ENCODE measurements at regions of chr3 and their contacts with region 1.

Region 1: DNA sequence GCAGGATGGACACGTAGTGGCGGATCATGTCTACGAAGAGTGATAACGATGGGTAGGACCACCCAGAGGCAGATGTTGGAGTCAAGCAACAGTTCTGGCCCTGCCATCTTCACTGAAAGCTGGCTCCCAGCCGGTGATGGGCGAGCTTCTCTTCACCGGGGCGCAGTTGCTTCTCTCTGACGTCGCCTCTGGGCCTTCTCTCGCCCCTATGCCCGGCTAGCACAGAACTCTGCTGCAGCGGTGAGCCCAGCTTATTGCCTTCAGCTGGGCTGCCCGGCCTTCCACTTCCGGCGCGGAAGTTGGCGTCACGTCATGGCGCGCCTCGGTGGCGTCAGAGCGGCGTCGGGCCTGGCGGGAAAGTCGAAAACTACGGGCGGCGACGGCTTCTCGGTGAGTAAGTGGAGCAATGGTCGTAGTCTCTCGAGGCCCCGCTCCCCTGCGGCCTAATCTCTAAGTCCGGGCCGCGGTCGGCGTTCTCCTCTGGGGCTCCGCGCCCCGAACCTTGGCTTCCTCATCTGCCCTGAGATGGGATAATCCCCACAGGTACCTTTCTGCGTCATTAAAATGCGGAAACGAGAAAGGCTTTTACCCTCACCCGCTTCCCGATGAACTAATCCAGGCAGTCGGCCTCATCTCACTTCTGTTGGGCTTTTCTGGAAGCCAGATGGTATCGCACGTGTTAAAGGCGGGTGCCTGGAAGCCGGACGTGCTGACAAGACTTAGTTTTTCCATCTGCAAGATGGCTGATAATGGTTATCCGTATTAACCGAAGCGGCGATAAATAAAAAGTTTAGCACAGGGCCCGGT is at the start of gene FANCD2:
- DNase-seq: peak; percentile 99
- H3K4me3 Mint-ChIP-seq: peak within 1 kb of the TSS; percentile 93
- H3K27ac Mint-ChIP-seq: peak within 1 kb of the TSS; percentile 98
- H3K4me1 Mint-ChIP-seq: peaks cover 18% of the 10 kb centered on the region
- H3K27me3 Mint-ChIP-seq: no peaks in the 10 kb centered on the region
- total RNA-seq, gene FANCD2: 71.4 and 73.8 TPM in 2 replicates

Region 2: GRCh38 chr3:9843715-9844438 is 182.4 kb before region 1 on chr3 and contains the start of gene RPUSD3:
- intact Hi-C with region 1: loop called (anchors 10 kb)
- DNase-seq: peak; percentile 99
- H3K4me3 Mint-ChIP-seq: peak within 1 kb of the TSS; percentile 99
- H3K27ac Mint-ChIP-seq: peak within 1 kb of the TSS; percentile 98
- H3K4me1 Mint-ChIP-seq: peaks cover 26% of the 10 kb centered on the region
- H3K27me3 Mint-ChIP-seq: no peaks in the 10 kb centered on the region
- total RNA-seq, gene RPUSD3: 84.3 and 85.7 TPM in 2 replicates

Region 3: DNA sequence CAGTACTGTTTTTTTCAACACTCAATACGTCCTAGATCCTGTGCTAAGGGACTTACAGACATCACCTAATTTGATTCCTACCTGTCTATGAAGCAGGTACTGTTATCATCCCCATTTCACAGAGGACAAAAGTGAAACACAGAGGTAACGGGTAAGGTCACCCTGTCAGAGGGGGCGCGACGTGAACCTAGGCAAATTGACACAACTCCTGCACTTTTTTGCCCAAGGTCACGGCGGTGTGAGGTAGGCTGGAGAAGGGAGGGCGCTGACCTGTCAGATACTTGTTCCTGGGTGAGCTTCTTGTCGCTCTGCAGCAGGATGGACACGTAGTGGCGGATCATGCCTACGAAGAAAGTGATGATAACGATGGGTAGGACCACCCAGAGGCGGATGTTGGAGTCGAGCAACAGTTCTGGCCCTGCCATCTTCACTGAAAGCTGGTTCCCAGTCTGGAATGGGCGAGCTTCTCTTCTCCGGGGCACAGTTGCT is 40.0 kb before region 1 on chr3:
- intact Hi-C with region 1: loop called (anchors 1 kb)
- DNase-seq: no peak
- H3K4me3 Mint-ChIP-seq: peak overlapping the region; percentile 97
- H3K27ac Mint-ChIP-seq: peak overlapping the region; percentile 99
- H3K4me1 Mint-ChIP-seq: peaks cover 31% of the 10 kb centered on the region
- H3K27me3 Mint-ChIP-seq: no peaks in the 10 kb centered on the region

Region 4: GRCh38 chr3:10142707-10143566 is 116.7 kb after region 1 on chr3:
- intact Hi-C with region 1: loop called (anchors 1 kb)
- DNase-seq: peak; percentile 72
- H3K4me3 Mint-ChIP-seq: peak overlapping the region; percentile 96
- H3K27ac Mint-ChIP-seq: peak overlapping the region; percentile 88
- H3K4me1 Mint-ChIP-seq: peaks cover 26% of the 10 kb centered on the region
- H3K27me3 Mint-ChIP-seq: no peaks in the 10 kb centered on the region

Region 5: DNA sequence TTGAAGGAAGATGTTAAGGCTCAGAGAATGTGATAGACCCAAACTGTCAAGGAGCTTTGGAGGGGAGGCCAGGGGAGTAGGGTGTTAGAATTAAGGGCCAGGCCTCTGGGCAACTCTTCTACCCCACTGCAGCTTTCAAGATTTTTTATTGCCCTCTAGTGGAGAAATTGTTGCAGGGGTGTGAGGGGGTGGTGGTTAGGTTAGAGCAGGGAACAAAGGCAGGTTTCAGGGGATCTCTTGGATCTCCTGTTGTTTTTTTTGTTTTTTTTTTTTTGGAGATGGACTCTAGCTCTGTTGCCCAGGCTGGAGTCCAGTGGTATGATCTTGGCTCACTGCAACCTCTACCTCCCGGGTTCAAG is 296.0 kb after region 1 on chr3:
- intact Hi-C with region 1: loop called (anchors 1 kb)
- DNase-seq: peak; percentile 80
- H3K4me3 Mint-ChIP-seq: no peak overlapping the region
- H3K27ac Mint-ChIP-seq: no peak overlapping the region
- H3K4me1 Mint-ChIP-seq: peaks cover 23% of the 10 kb centered on the region
- H3K27me3 Mint-ChIP-seq: peaks cover 19% of the 10 kb centered on the region

Region 6: DNA sequence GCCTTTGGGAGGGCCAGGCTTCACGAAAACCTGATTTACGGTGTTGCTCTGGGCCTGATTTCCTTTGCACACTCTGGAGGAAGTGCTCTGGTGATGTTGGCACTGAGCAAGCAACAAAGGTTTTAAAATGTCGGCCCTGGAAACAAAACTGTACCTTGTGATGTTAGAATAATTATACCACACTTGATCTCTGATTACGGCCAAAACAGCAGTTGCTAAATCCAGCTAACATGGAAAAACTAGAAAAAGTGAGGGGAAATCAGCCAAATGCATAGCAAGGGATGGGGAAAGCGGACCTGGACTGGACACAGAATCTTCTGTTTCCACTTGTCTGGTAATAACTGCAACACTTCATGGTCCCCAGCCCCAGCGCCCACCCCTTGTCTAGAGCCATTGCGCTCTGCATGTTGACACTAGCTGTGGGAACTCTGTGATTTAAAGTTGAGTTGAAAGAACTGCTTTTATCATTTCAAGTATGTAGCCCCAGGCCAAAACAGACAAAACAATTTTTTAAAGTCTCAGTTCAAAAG is 1497.3 kb after region 1 on chr3:
- intact Hi-C with region 1: no loop called
- DNase-seq: no peak
- H3K4me3 Mint-ChIP-seq: no peak overlapping the region
- H3K27ac Mint-ChIP-seq: no peak overlapping the region
- H3K4me1 Mint-ChIP-seq: no peaks in the 10 kb centered on the region
- H3K27me3 Mint-ChIP-seq: no peaks in the 10 kb centered on the region